ENCODE measurements at regions of chr14 and their contacts with region 1.

Region 1: GRCh38 chr14:50085570-50086320 is 30.6 kb downstream of the VCPKMT start:
- DNase-seq: peak in 4 of 35 experiments; percentile 13 to 63 (median 26)
- ATAC-seq: no peak
- H3K4me3 ChIP-seq: no peak overlapping the region
- H3K4me3 Mint-ChIP-seq: peak overlapping the region; percentile 39 to 70 (median 59)
- H3K27ac ChIP-seq: peak overlapping the region; percentile 99
- H3K27ac Mint-ChIP-seq: peak overlapping the region; percentile 95 to 96
- H3K4me1 ChIP-seq: peaks cover 83 to 90% of the 10 kb centered on the region in 2 experiments
- H3K4me1 Mint-ChIP-seq: peaks cover 91 to 93% (median 92%) of the 10 kb centered on the region in 3 donors
- H3K27me3 ChIP-seq: no peaks in the 10 kb centered on the region
- H3K27me3 Mint-ChIP-seq: no peaks in the 10 kb centered on the region

Region 2: DNA sequence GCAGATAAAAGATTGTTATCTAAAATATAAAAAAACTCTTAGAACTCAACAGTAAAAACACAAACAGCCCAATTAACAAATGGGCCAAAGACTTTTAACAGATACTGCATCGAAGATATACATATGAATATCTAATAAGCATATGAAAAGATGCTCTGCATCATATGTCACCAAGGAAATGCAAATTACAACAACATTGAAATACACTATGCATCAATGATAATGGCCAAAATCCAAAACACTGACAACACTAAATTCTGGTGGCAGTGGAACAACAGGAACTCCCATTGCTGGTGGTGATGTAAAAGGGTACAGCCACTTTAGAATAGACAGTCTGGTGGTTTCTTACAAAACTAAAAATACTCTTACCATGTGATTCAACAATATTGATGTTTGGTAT is 277.0 kb before region 1 on chr14:
- CTCF ChIA-PET with region 1: no interaction called
- POLR2A ChIA-PET with region 1: no interaction called
- DNase-seq: no peak
- ATAC-seq: no peak
- H3K4me3 ChIP-seq: no peak overlapping the region
- H3K4me3 Mint-ChIP-seq: no peak overlapping the region
- H3K27ac ChIP-seq: no peak overlapping the region
- H3K27ac Mint-ChIP-seq: peak overlapping the region in 1 of 2 donors; percentile 12
- H3K4me1 ChIP-seq: no peaks in the 10 kb centered on the region
- H3K4me1 Mint-ChIP-seq: peaks cover 0 to 11% (median 7%) of the 10 kb centered on the region in 3 donors
- H3K27me3 ChIP-seq: no peaks in the 10 kb centered on the region
- H3K27me3 Mint-ChIP-seq: no peaks in the 10 kb centered on the region

Region 3: DNA sequence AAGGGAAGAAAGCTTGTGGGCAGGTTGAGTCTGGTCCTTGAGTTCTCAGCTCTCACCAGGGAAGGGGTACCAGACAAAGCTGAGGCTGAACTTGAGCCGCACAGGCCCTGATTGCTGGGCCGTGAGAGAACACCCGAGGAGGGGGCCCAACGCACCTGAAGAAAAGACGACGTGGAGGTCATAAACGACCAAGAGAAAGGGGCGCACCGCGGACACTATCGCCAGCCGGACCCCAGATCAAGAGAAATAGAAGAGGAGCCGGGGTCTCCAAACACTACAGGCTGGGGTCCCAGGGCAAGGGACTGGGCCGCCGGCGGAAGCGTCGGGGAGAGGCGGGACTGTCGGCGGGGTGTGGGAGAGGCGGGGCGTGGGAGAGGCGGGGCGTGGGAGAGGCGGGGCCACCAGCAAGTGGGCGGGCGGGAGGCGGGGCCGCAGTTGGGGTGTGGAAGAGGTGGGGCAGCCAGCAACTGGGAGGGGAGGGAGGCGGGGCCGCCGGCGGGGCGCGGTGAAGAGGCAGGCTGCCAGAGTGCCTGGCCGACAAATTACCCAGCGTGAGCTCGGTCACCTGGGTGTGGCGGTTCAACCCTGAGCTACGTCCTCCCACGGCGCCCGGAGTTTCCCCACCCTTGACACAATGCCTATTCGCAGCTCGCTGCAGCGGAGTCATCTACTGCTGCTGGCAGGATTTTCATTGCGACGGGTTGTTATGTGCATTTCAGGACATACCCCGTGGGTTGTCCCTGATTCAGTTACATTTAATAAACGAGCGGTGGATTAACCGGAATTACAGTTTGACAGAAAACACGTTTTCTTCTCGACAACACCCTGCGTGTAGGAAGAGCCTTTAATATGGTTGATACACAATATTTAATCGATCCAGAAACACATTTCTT is 217.7 kb before region 1 on chr14:
- CTCF ChIA-PET with region 1: interaction called, 4 to 45 read pairs
- POLR2A ChIA-PET with region 1: interaction called, 4 to 5 read pairs
- DNase-seq: peak; percentile 91 to 98 (median 97)
- ATAC-seq: peak; percentile 89 to 94 (median 93)
- H3K4me3 ChIP-seq: peak overlapping the region; percentile 44 to 49
- H3K4me3 Mint-ChIP-seq: peak overlapping the region; percentile 84 to 87 (median 86)
- H3K27ac ChIP-seq: peak overlapping the region; percentile 85
- H3K27ac Mint-ChIP-seq: peak overlapping the region; percentile 97 to 98
- H3K4me1 ChIP-seq: peaks cover 21 to 35% of the 10 kb centered on the region in 2 experiments
- H3K4me1 Mint-ChIP-seq: peaks cover 12 to 28% (median 15%) of the 10 kb centered on the region in 3 donors
- H3K27me3 ChIP-seq: no peaks in the 10 kb centered on the region
- H3K27me3 Mint-ChIP-seq: no peaks in the 10 kb centered on the region

Region 4: GRCh38 chr14:49900973-49901372 is 184.8 kb before region 1 on chr14:
- CTCF ChIA-PET with region 1: interaction called in 1 of 2 experiments, 10 read pairs
- POLR2A ChIA-PET with region 1: no interaction called
- DNase-seq: no peak
- ATAC-seq: no peak
- H3K4me3 ChIP-seq: no peak overlapping the region
- H3K4me3 Mint-ChIP-seq: no peak overlapping the region
- H3K27ac ChIP-seq: no peak overlapping the region
- H3K27ac Mint-ChIP-seq: no peak overlapping the region
- H3K4me1 ChIP-seq: peaks cover 14 to 28% of the 10 kb centered on the region in 2 experiments
- H3K4me1 Mint-ChIP-seq: peaks cover 37 to 44% (median 41%) of the 10 kb centered on the region in 3 donors
- H3K27me3 ChIP-seq: no peaks in the 10 kb centered on the region
- H3K27me3 Mint-ChIP-seq: no peaks in the 10 kb centered on the region

Region 5: GRCh38 chr14:50003213-50004031 is 82.3 kb before region 1 on chr14:
- CTCF ChIA-PET with region 1: interaction called in 1 of 2 experiments, 8 read pairs
- POLR2A ChIA-PET with region 1: interaction called, 3 to 10 read pairs
- DNase-seq: peak; percentile 59 to 86 (median 72)
- ATAC-seq: peak; percentile 40 to 47 (median 44)
- H3K4me3 ChIP-seq: peak overlapping the region; percentile 60 to 83
- H3K4me3 Mint-ChIP-seq: peak overlapping the region; percentile 73 to 78 (median 75)
- H3K27ac ChIP-seq: peak overlapping the region; percentile 100
- H3K27ac Mint-ChIP-seq: peak overlapping the region; percentile 96 to 98
- H3K4me1 ChIP-seq: peaks cover 42 to 59% of the 10 kb centered on the region in 2 experiments
- H3K4me1 Mint-ChIP-seq: peaks cover 46 to 62% (median 52%) of the 10 kb centered on the region in 3 donors
- H3K27me3 ChIP-seq: no peaks in the 10 kb centered on the region
- H3K27me3 Mint-ChIP-seq: no peaks in the 10 kb centered on the region

Region 6: GRCh38 chr14:50060871-50061663 is 24.7 kb before region 1 on chr14:
- CTCF ChIA-PET with region 1: interaction called, 3 to 19 read pairs
- POLR2A ChIA-PET with region 1: interaction called, 10 to 43 read pairs
- DNase-seq: peak in 9 of 35 experiments; percentile 11 to 66 (median 34)
- ATAC-seq: no peak
- H3K4me3 ChIP-seq: peak overlapping the region in 1 of 2 donors; percentile 41
- H3K4me3 Mint-ChIP-seq: peak overlapping the region; percentile 70 to 90 (median 88)
- H3K27ac ChIP-seq: peak overlapping the region; percentile 93
- H3K27ac Mint-ChIP-seq: peak overlapping the region; percentile 100
- H3K4me1 ChIP-seq: peaks cover 44 to 76% of the 10 kb centered on the region in 2 experiments
- H3K4me1 Mint-ChIP-seq: peaks cover 75 to 92% (median 82%) of the 10 kb centered on the region in 3 donors
- H3K27me3 ChIP-seq: no peaks in the 10 kb centered on the region
- H3K27me3 Mint-ChIP-seq: no peaks in the 10 kb centered on the region

Region 7: GRCh38 chr14:50101417-50101816 is 15.7 kb after region 1 on chr14:
- CTCF ChIA-PET with region 1: interaction called, 7 to 11 read pairs
- POLR2A ChIA-PET with region 1: interaction called, 4 to 7 read pairs
- DNase-seq: no peak
- ATAC-seq: no peak
- H3K4me3 ChIP-seq: no peak overlapping the region
- H3K4me3 Mint-ChIP-seq: no peak overlapping the region
- H3K27ac ChIP-seq: no peak overlapping the region
- H3K27ac Mint-ChIP-seq: peak overlapping the region in 1 of 2 donors; percentile 86
- H3K4me1 ChIP-seq: peaks cover 33 to 51% of the 10 kb centered on the region in 2 experiments
- H3K4me1 Mint-ChIP-seq: peaks cover 53 to 70% (median 68%) of the 10 kb centered on the region in 3 donors
- H3K27me3 ChIP-seq: no peaks in the 10 kb centered on the region
- H3K27me3 Mint-ChIP-seq: no peaks in the 10 kb centered on the region

Region 8: GRCh38 chr14:50285861-50286260 is 200.1 kb after region 1 on chr14:
- CTCF ChIA-PET with region 1: no interaction called
- POLR2A ChIA-PET with region 1: no interaction called
- DNase-seq: no peak
- ATAC-seq: no peak
- H3K4me3 ChIP-seq: no peak overlapping the region
- H3K4me3 Mint-ChIP-seq: no peak overlapping the region
- H3K27ac ChIP-seq: no peak overlapping the region
- H3K27ac Mint-ChIP-seq: no peak overlapping the region
- H3K4me1 ChIP-seq: no peaks in the 10 kb centered on the region
- H3K4me1 Mint-ChIP-seq: no peaks in the 10 kb centered on the region
- H3K27me3 ChIP-seq: no peaks in the 10 kb centered on the region
- H3K27me3 Mint-ChIP-seq: no peaks in the 10 kb centered on the region

Region 9: DNA sequence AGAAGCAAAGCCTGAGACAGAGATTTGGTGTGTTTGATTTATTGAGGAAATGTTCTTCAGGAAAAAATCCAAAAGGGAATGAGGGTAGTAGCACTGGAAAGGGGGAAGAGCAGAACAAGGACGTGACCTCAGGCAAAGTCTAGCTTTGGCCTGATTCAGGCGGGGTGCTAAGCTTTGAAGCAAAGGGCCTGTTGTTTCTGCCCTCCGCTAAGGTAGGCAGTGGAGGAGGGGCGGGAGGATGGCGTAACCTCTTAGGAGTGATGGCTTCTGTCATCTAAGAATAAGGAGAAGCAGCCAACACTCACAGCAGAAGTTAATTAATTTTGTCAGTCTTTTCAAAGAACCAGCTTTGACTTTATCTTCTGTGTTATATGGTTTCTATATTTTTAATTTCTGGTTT is 806.5 kb after region 1 on chr14:
- CTCF ChIA-PET with region 1: no interaction called
- POLR2A ChIA-PET with region 1: no interaction called
- DNase-seq: no peak
- ATAC-seq: no peak
- H3K4me3 ChIP-seq: no peak overlapping the region
- H3K4me3 Mint-ChIP-seq: no peak overlapping the region
- H3K27ac ChIP-seq: no peak overlapping the region
- H3K27ac Mint-ChIP-seq: no peak overlapping the region
- H3K4me1 ChIP-seq: no peaks in the 10 kb centered on the region
- H3K4me1 Mint-ChIP-seq: no peaks in the 10 kb centered on the region
- H3K27me3 ChIP-seq: no peaks in the 10 kb centered on the region
- H3K27me3 Mint-ChIP-seq: peaks cover 1 to 18% of the 10 kb centered on the region in 2 donors